Aorta (tissue), 5 donors: ENCODE measurements at regions of chr17 and their contacts with region 1.

Region 1: DNA sequence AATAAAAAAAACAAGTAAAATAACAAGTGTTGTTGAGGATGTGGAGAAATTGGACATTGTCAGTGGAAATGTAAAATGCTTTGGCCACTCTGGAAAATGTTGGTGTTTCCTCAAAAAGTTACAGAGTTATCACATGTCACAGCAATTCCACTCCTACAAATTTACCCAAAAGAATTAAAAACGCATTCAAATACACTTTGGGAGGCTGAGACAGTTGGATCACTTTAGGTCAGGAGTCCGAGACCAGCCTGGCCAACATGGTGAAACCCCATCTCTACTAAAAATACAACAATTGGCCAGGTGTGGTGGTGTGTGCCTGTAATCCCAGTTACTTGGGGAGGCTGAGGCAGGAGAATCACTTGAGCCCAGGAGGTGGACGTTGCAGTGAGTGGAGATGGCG is 5.6 kb downstream of the TOP3A start:
- DNase-seq: peak in 1 of 2 donors; percentile 12
- ATAC-seq: no peak
- H3K4me3 ChIP-seq: no peak overlapping the region
- H3K27ac ChIP-seq: no peak overlapping the region
- H3K4me1 ChIP-seq: no peaks in the 10 kb centered on the region
- H3K27me3 ChIP-seq: no peaks in the 10 kb centered on the region

Region 2: GRCh38 chr17:18205861-18206260 is 103.3 kb before region 1 on chr17:
- intact Hi-C with region 1: loop called in 1 of 2 experiments (anchors 5 kb)
- DNase-seq: no peak
- ATAC-seq: no peak
- H3K4me3 ChIP-seq: no peak overlapping the region
- H3K27ac ChIP-seq: no peak overlapping the region
- H3K4me1 ChIP-seq: no peaks in the 10 kb centered on the region
- H3K27me3 ChIP-seq: no peaks in the 10 kb centered on the region

Region 3: DNA sequence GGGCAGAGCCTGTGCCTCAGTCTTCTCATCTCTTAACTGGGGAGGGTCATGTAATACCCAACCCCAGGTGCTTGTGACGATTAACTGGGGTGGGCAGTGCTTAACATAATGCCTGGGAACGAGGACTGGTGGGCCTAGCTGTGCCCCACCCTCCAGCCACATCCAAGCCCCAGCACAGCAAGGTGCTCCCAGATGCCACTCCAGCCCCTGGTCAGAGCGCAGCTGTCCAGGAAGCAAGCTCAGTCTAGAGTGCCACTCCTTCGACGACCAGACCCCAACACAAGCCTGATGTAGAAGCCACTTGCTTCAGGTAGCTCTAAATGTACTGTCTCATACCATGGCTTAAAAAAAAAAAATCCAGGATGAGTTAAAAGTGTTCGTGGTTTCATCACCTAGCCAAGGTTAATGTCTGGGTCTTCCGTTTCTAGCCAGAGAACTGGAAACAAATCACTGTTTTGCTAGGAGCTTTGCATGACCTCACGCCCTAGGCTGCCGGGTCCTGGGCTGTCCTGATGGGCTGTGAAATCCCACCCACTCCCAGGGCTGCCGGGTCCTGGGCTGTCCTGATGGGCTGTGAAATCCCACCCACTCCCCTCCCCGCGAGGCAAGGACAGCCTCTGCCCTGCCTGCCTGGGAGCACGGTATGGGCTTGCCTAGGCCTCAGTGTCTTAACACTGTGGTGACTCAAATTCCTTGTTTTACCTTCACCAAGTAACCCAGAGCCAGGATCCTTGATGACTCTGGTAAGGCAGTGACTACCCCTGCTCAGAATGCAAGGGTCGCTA is 41.1 kb before region 1 on chr17:
- intact Hi-C with region 1: no loop called
- DNase-seq: no peak
- ATAC-seq: no peak
- H3K4me3 ChIP-seq: no peak overlapping the region
- H3K27ac ChIP-seq: no peak overlapping the region
- H3K4me1 ChIP-seq: no peaks in the 10 kb centered on the region
- H3K27me3 ChIP-seq: no peaks in the 10 kb centered on the region

Region 4: DNA sequence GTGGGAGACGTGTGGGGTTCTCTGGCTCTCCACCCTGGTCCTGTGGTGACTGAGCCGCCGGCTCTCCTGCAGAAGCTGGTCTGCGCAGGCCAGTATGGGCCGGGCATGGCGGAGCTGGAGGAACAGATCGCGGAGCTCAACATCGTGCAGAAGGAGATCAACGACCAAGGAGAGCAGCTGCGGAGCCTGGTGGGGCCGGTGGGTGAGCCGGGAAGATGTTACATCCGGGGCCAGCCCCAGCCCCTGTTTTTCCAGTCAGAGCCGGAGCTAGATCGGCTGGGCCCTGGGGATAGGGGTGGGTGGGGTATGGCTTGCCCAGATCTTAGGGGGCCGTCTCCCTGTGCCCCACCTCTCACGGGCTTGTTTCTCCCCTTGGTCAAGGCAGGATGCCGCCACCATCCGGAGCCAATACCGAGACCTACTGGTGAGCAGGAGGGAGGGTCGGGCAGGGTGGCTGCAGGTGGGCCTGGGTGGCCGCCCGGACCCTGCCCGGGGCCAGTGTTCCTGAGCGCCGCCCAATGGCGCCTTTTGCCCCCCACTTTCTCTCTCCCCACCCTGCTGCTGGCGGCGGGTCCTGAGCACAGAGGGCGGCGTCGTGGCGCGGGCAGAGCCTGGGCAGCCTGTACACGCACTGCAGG is 73.4 kb after region 1 on chr17:
- intact Hi-C with region 1: no loop called
- DNase-seq: no peak
- ATAC-seq: no peak
- H3K4me3 ChIP-seq: no peak overlapping the region
- H3K27ac ChIP-seq: no peak overlapping the region
- H3K4me1 ChIP-seq: no peaks in the 10 kb centered on the region
- H3K27me3 ChIP-seq: no peaks in the 10 kb centered on the region